Ovary (tissue), 10 donors: ENCODE measurements at regions of chr10 and their contacts with region 1.

Region 1: GRCh38 chr10:112446855-112447711 is at the starts of genes VTI1A and ZDHHC6:
- DNase-seq: peak; percentile 81 to 89 (median 85)
- H3K4me3 ChIP-seq: peak within 1 kb of the TSS; percentile 84
- H3K27ac ChIP-seq: peak within 1 kb of the TSS; percentile 53 to 82
- H3K4me1 ChIP-seq: peaks cover 5% of the 10 kb centered on the region
- H3K27me3 ChIP-seq: no peaks in the 10 kb centered on the region
- CTCF ChIP-seq: no peak
- EP300 ChIP-seq: no peak
- POLR2A ChIP-seq: peak; percentile 62
- total RNA-seq, gene VTI1A: 15.8 to 48.2 (median 23.6) TPM
- total RNA-seq, gene ZDHHC6: 14.8 to 34.8 (median 26.9) TPM

Region 2: DNA sequence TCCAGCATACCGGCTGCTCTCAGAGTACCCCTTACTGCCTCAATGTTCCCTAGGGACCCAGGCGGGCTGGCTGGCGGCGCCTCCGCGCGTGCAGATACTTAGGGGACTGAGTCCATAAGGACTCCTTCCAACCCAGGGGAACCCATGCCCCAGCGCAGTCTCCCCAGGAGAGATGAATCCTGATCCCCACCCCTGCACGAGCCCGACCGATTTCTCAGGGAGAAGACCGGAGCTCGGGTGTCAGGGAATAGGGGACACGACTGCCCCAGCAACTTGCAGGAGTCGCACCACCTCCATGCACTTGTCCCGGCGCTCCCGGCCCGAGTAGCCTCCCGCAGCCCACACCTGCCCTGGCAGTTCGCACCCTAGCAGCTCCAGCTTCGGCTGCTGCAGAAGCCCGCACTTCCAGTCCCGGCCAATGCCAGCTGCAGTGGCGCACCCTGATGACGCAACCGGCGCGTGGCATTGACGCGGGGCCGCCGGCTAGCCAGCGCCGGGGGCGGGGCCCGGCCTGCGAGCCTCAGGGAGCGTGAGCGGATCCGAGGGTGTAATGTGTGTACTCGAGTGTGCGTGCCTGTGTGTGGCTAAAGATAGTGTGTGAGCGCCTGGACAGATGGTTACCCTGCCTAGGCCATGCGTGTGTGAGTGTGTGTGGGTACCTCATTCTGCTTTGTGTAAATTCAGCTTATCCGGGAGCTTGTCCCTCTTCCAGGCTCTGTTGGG is 263.6 kb before region 1 on chr10 and contains the start of gene GPAM:
- intact Hi-C with region 1: loop called in 1 of 4 experiments (anchors 10 kb)
- DNase-seq: peak; percentile 90 to 98 (median 96)
- H3K4me3 ChIP-seq: peak within 1 kb of the TSS; percentile 53
- H3K27ac ChIP-seq: peak within 1 kb of the TSS in 1 of 2 donors; percentile 58
- H3K4me1 ChIP-seq: peaks cover 2% of the 10 kb centered on the region
- H3K27me3 ChIP-seq: no peaks in the 10 kb centered on the region
- CTCF ChIP-seq: peak in 1 of 3 donors; percentile 9
- EP300 ChIP-seq: no peak
- POLR2A ChIP-seq: peak; percentile 46
- total RNA-seq, gene GPAM: 4.5 to 15.8 (median 8.7) TPM

Region 3: DNA sequence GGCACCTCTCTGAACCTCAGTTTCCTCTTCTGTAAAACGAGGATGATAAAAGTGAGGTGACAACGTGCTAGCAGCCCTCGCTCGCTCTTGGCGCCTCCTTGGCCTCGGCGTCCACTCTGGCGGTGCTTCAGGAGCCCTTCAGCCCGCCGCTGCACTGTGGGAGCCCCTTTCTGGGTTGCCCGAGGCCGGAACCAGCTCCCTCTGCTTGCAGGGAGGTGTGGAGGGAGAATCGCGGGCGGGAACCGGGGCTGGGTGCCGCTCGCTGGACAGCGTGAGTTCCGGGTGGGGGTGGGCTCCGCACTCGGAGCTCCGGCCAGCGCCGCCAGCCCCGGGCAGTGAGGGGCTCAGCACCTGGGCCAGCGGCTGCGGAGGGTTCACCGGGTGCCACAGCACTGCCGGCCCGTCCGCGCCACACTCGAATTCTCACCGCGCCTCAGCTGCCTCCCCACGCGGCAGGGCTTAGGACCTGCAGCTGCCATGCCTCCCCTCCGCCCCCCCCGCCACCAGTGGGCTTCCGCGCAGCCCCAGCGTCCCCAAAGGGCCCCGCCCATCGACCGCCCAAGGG is 97.5 kb before region 1 on chr10:
- intact Hi-C with region 1: no loop called
- DNase-seq: no peak
- H3K4me3 ChIP-seq: no peak overlapping the region
- H3K27ac ChIP-seq: no peak overlapping the region
- H3K4me1 ChIP-seq: no peaks in the 10 kb centered on the region
- H3K27me3 ChIP-seq: no peaks in the 10 kb centered on the region
- CTCF ChIP-seq: no peak
- EP300 ChIP-seq: no peak
- POLR2A ChIP-seq: no peak

Region 4: DNA sequence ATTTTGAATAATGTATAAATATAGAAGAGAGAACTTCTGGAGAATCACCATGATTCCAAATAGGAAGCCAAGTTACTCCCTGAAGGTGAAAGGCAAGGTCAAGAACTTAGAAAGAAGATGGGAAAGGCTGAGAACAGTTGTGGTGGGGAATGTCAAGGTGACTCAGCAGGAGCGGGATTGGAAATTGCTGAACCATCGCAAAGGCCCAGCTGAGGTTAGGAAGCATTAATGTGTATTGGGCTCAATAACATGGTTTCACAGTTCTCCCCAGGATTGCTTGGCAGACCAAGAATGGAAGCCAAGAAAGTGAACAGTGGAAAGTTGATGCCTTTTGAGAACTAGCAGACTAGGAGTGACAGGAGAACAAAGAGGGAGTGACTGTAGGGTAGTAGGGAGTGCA is 133.2 kb after region 1 on chr10:
- intact Hi-C with region 1: no loop called
- DNase-seq: no peak
- H3K4me3 ChIP-seq: no peak overlapping the region
- H3K27ac ChIP-seq: no peak overlapping the region
- H3K4me1 ChIP-seq: no peaks in the 10 kb centered on the region
- H3K27me3 ChIP-seq: no peaks in the 10 kb centered on the region
- CTCF ChIP-seq: no peak
- EP300 ChIP-seq: no peak
- POLR2A ChIP-seq: no peak

Region 5: GRCh38 chr10:112622786-112623185 is 175.7 kb after region 1 on chr10:
- intact Hi-C with region 1: no loop called
- DNase-seq: no peak
- H3K4me3 ChIP-seq: no peak overlapping the region
- H3K27ac ChIP-seq: no peak overlapping the region
- H3K4me1 ChIP-seq: no peaks in the 10 kb centered on the region
- H3K27me3 ChIP-seq: no peaks in the 10 kb centered on the region
- CTCF ChIP-seq: no peak
- EP300 ChIP-seq: no peak
- POLR2A ChIP-seq: no peak